ENCODE measurements at regions of chr19 and their contacts with region 1.

Region 1: DNA sequence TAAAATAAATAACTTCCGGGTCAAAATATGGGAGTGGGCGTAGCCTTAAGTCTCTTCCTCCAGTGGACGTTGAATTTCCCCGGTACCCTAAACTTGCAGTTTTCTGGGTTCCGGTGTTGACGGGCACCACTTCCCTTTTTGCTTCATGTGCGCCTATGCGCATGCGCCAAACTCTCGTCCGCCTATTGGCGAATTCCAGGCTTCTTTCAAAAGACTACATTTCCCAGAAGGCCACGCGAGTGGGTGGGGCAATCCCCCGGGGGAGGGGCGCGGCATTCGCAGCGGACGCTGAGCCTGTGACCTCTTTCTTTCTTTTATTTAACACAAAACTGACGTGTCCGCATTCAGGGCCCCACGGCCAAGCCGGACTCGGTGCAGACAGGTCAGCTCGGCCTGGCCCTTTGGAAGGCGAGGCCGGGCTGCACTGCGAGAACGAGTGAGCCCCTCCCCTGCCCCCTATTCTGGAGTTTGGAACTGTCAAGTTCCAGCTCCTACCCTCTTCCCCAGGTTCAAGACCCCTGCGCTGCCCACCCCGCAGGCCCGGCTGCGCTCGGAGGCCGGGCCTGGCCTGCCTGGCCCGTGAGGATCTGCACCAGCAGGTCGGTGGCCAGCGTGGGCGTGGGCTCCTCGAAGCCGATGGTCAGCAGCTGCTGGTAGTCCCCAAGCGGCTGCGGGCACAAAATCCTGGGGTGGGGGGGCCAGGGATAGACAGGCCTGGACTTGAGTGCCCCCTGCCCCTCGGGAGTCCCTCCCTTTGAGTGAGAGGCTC is 4.1 kb downstream of the C19orf67 start:
- DNase-seq: peak; percentile 99
- H3K4me3 ChIP-seq: peak overlapping the region; percentile 75
- H3K27ac ChIP-seq: peak overlapping the region; percentile 86
- H3K27me3 ChIP-seq: no peaks in the 10 kb centered on the region
- CTCF ChIP-seq: no peak

Region 2: DNA sequence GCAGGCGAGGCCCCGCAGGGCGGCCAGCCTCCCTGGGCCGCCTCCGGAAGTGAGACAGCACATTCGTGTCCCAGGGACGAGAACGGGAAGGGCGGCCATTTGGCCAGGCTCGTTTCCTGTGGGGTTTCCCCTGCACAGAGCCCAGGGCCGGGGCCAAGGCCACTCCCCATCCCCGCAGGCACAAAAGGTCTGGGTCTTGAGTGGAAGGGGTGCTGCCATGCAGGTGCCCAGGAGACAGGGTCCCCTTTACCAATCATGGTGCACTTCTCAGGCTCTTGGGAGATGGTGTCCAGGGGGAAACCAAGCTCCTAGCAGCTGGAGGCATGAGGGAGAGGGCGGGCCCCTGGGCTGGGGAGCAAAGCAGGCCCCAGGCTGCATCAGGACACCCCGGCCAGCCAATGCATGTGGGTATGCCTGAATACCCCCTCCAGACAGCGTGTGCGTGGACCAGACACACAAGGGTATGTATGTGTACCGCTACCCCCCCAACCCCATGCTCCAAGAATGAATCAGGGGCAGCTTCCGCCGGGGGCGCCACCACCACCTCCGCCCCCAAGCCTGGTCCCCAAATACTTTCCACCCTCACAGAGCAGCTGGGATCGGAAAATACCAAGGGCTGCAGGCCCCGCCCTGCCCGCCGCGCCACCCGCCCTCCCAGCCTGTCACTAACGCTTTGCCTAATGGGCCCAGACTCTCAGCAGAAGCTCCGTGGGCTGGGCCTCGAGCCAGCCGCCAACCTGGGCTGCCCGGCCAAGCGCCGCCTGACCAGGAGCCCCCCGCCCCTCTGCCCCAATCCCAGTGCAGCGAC is 242.2 kb before region 1 on chr19:
- CTCF ChIA-PET with region 1: interaction called, 3 read pairs
- POLR2A ChIA-PET with region 1: interaction called, 10 read pairs
- DNase-seq: no peak
- H3K4me3 ChIP-seq: peak overlapping the region; percentile 88
- H3K27ac ChIP-seq: peak overlapping the region; percentile 90
- H3K27me3 ChIP-seq: no peaks in the 10 kb centered on the region
- CTCF ChIP-seq: no peak

Region 3: GRCh38 chr19:13995017-13995728 is 86.3 kb before region 1 on chr19:
- CTCF ChIA-PET with region 1: no interaction called
- POLR2A ChIA-PET with region 1: no interaction called
- DNase-seq: no peak
- H3K4me3 ChIP-seq: no peak overlapping the region
- H3K27ac ChIP-seq: no peak overlapping the region
- H3K27me3 ChIP-seq: no peaks in the 10 kb centered on the region
- CTCF ChIP-seq: no peak

Region 4: GRCh38 chr19:14019100-14019499 is 62.4 kb before region 1 on chr19:
- CTCF ChIA-PET with region 1: no interaction called
- POLR2A ChIA-PET with region 1: interaction called, 10 read pairs
- DNase-seq: no peak
- H3K4me3 ChIP-seq: no peak overlapping the region
- H3K27ac ChIP-seq: no peak overlapping the region
- H3K27me3 ChIP-seq: no peaks in the 10 kb centered on the region
- CTCF ChIP-seq: no peak

Region 5: GRCh38 chr19:14066134-14066533 is 15.4 kb before region 1 on chr19:
- CTCF ChIA-PET with region 1: no interaction called
- POLR2A ChIA-PET with region 1: no interaction called
- DNase-seq: no peak
- H3K4me3 ChIP-seq: no peak overlapping the region
- H3K27ac ChIP-seq: no peak overlapping the region
- H3K27me3 ChIP-seq: no peaks in the 10 kb centered on the region
- CTCF ChIP-seq: no peak

Measured in AG04450 (cell line).